ENCODE measurements at regions of chr10 and their contacts with region 1.

Region 1: GRCh38 chr10:116687633-116688032 is 54.7 kb downstream of the HSPA12A start:
- DNase-seq: no peak
- H3K4me3 Mint-ChIP-seq: no peak overlapping the region
- H3K27ac Mint-ChIP-seq: no peak overlapping the region
- H3K4me1 Mint-ChIP-seq: no peaks in the 10 kb centered on the region
- H3K27me3 Mint-ChIP-seq: peaks cover 5% of the 10 kb centered on the region

Region 2: DNA sequence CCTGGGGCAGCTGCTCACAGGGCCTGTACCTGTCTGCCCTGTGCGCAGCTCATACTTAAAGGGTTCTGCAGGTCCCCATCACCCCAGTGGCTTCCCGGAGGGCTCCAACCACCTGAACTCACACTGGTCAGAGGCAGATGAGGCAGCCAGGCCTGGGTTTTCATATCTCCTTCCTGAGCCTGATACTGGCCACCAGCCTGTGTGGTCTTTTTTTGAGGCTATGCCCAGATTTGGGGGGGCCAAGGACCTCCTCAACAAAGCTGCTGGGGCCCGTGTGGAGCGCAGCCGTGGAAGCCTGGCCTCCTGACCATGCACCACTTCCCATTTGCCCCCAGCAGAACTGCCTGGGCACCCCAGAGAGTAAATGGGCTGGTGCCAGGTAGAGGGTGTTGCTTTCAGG is 41.1 kb before region 1 on chr10:
- intact Hi-C with region 1: no loop called
- DNase-seq: no peak
- H3K4me3 Mint-ChIP-seq: no peak overlapping the region
- H3K27ac Mint-ChIP-seq: no peak overlapping the region
- H3K4me1 Mint-ChIP-seq: no peaks in the 10 kb centered on the region
- H3K27me3 Mint-ChIP-seq: no peaks in the 10 kb centered on the region

Region 3: DNA sequence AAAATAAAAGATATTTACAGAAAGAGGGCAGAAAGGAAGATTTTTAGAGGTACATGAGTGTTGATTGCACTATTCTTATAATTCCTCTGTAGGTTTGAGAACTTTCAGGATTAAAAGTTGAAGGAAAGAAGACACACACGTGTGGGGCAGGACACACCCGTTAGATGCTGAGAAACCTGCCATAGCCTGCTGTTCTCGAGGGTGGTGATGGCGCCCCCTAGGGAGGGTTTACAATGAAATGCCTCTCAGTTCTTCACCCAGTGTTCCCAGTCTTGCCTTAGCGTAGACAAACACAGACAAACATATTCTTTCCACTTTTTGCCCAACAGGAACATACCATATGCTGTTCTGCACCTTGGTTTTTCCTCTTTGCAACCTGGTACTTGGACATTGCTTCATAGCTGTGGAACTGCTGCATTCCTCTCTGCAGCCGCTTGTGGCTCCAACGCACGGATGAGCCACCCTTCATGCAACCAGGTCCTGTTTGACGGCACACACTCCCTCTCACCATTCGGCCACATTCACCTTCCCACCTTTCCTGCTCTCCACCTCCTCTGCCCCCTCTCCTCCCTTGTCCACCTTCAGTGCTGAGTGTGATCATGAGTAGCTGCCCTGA is 78.0 kb after region 1 on chr10:
- intact Hi-C with region 1: loop called (anchors 1 kb)
- DNase-seq: no peak
- H3K4me3 Mint-ChIP-seq: no peak overlapping the region
- H3K27ac Mint-ChIP-seq: no peak overlapping the region
- H3K4me1 Mint-ChIP-seq: no peaks in the 10 kb centered on the region
- H3K27me3 Mint-ChIP-seq: peaks cover 11% of the 10 kb centered on the region

Region 4: DNA sequence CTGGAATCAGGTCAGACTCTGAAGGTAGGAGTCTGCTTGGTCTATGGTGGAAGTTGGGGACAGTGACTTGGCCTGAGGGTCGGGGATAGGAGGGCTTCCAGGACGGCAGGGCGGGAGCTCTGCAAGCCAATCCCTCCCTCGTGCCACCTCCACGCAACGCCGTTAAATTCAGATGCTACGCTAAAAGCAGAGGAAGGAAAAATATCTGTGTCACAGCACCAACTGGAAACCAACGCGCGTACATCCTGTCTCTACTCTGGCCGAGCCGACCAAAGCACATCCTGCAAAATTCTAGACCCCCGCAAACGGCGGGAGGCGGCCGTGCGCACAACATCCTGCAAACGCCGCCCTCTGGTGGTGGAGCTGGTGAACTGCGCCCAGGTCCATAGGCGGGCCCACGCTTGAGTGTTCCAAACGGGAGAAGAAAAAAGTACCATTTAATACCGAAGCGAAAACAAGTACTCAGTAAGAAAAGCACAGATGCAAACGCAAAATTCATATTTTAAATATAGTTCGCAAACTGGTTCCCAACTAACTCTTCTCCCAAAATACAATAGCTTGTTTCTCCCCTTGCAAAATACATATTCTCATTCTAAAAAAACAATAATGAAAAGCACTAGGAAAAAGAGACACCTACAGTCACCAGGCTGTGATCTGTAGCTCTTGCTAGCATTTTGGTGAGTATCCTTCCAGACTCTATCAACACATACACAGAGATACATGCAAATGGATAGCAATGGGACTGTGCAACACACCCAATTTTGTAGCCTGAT is 100.4 kb after region 1 on chr10:
- intact Hi-C with region 1: loop called (anchors 1 kb)
- DNase-seq: peak; percentile 65
- H3K4me3 Mint-ChIP-seq: peak overlapping the region; percentile 45
- H3K27ac Mint-ChIP-seq: peak overlapping the region; percentile 76
- H3K4me1 Mint-ChIP-seq: peaks cover 17% of the 10 kb centered on the region
- H3K27me3 Mint-ChIP-seq: peaks cover 3% of the 10 kb centered on the region

Region 5: GRCh38 chr10:117174439-117175214 is 487.0 kb after region 1 on chr10:
- intact Hi-C with region 1: loop called (anchors 5 kb)
- DNase-seq: peak; percentile 73
- H3K4me3 Mint-ChIP-seq: peak overlapping the region; percentile 77
- H3K27ac Mint-ChIP-seq: peak overlapping the region; percentile 42
- H3K4me1 Mint-ChIP-seq: peaks cover 13% of the 10 kb centered on the region
- H3K27me3 Mint-ChIP-seq: peaks cover 41% of the 10 kb centered on the region

Region 6: DNA sequence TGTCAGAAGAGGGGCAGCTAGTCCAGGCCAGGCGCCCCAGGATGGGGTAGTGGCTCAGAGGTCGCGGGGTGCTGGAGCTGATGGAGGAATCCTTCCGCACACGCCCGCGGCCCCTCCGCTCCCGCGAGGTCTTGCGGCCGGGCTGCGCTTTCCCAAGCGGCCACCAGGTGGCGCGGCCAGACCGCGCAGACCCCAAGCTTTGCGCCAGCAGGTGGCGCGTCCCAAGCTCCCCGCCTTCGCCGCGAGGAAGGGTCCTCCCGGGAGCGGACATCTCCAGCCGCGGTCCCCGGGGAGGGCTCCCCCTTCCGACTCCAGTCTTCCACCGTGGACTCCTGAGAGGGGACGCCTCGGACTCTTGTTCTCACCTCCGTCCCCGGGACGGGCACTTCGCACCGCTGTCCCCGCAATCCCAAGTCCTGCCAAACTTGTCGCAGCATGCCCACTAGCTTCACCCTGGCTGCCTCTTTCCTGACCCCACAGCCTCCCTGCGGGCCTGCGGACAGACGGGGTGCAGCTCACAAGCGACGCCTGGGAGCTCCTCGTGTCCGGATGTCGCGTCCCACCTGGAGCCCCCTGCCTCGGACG is 529.1 kb after region 1 on chr10:
- intact Hi-C with region 1: no loop called
- DNase-seq: peak; percentile 59
- H3K4me3 Mint-ChIP-seq: peak overlapping the region; percentile 75
- H3K27ac Mint-ChIP-seq: no peak overlapping the region
- H3K4me1 Mint-ChIP-seq: peaks cover 4% of the 10 kb centered on the region
- H3K27me3 Mint-ChIP-seq: peaks cover 29% of the 10 kb centered on the region

Measured in activated T-helper 2 cell treated with anti-CD3 and anti-CD28 coated beads, Interferon-gamma antibody, Interleukin-2, Interleukin-4, amounts not matched to agents 10 μg/mL and 5 μg/mL and 100 μg/mL, durations not matched to agents 14 hours and 24 hours and 36 hours (primary cell).